ENCODE measurements at regions of chr2 and their contacts with region 1.

Region 1: DNA sequence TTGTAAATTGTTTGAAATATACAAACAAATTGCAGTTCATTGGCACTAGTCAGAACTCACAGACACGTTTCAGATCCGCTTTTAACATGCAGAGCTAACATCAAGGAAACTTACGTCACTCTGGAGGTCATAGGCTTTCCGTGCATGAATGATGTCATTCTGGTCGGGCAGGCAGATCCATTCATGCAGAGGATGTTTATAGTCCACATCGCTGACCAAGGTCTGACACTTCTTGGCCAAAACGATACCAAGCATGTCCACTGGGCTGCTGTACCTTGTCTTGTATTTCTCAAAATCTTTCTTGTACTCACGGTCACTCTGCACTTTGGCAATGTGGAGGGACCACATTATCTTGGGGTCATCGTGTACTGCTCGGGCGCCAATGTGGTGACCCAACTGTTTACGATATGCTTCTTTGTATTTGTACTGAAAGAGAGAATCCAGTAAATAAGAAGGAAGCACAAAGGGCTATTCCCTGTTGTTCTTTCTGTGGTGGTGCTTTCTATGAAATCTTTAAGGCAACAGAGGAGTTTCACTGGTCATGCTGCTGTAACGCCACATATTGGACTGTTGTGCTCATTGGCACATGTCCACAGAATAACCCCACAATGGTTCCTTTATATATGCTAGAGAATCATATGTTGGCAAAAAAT is 114.8 kb downstream of the NEB start:
- DNase-seq: peak in 1 of 2 donors; percentile 68
- H3K4me3 ChIP-seq: no peak overlapping the region
- H3K27ac ChIP-seq: no peak overlapping the region
- H3K4me1 ChIP-seq: no peaks in the 10 kb centered on the region
- H3K27me3 ChIP-seq: no peaks in the 10 kb centered on the region
- CTCF ChIP-seq: no peak
- EP300 ChIP-seq: no peak
- POLR2A ChIP-seq: no peak

Region 2: GRCh38 chr2:151900331-151900730 is 280.9 kb after region 1 on chr2:
- intact Hi-C with region 1: no loop called
- DNase-seq: no peak
- H3K4me3 ChIP-seq: no peak overlapping the region
- H3K27ac ChIP-seq: no peak overlapping the region
- H3K4me1 ChIP-seq: no peaks in the 10 kb centered on the region
- H3K27me3 ChIP-seq: no peaks in the 10 kb centered on the region
- CTCF ChIP-seq: no peak
- EP300 ChIP-seq: no peak
- POLR2A ChIP-seq: no peak

Region 3: DNA sequence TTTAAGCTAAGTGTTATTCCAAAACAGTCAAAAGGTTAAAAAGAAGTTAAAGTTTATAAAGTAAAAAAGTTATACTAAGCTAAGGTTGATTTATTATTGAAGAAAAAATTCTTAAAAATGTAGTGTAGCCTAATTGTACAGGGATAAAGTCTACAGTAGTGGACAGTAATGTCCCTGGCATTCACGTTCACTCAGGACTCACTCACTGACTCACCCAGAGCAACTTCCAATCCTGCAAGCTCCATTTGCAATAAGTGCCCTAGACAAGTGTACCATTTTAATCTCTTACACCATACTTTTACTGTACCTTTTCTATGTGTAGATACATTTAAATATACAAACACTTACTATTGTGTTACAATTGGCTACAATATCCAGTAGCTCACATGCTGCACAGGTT is 393.2 kb after region 1 on chr2:
- intact Hi-C with region 1: loop called (anchors 10 kb)
- DNase-seq: no peak
- H3K4me3 ChIP-seq: no peak overlapping the region
- H3K27ac ChIP-seq: no peak overlapping the region
- H3K4me1 ChIP-seq: no peaks in the 10 kb centered on the region
- H3K27me3 ChIP-seq: no peaks in the 10 kb centered on the region
- CTCF ChIP-seq: no peak
- EP300 ChIP-seq: no peak
- POLR2A ChIP-seq: no peak